CD4-positive, alpha-beta T cell (primary cell): ENCODE measurements at regions of chr17 and their contacts with region 1.

Region 1: DNA sequence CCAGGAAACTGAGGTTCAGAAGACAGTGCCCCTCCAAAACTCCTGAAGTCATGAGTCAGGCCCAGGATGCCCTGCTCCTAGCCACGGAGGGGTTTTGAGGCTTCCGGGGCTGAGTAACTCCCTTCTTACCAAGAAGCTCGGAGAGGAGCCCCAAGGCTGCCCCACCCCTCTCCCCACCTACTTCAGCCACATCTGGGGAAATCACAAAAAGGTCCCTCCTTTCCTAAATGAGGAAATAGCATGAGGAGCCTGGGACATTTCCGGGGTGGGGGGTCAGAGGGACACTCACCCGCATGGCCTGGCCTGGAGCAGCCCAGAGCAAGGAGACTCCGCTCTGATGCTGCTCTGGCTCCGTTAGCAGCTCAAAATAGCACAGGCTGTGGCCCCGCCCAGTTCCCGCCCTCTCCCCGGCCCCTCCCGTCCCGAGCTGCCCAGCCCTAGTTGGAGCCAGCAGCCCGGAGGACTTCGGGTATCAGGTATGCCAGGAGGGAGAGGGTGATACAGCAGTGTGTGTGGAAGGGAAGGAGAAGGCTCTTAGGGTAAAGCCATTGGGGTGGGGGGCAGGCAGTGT is 40.1 kb downstream of the MYO18A start:
- DNase-seq: peak; percentile 57 to 90 (median 78)
- ATAC-seq: peak; percentile 53
- H3K4me3 ChIP-seq: peak overlapping the region; percentile 64
- H3K4me3 Mint-ChIP-seq: peak overlapping the region; percentile 91
- H3K27ac ChIP-seq: peak overlapping the region; percentile 78 to 82
- H3K27ac Mint-ChIP-seq: peak overlapping the region; percentile 96
- H3K4me1 ChIP-seq: peaks cover 80% of the 10 kb centered on the region
- H3K4me1 Mint-ChIP-seq: peaks cover 70% of the 10 kb centered on the region
- H3K27me3 ChIP-seq: no peaks in the 10 kb centered on the region
- H3K27me3 Mint-ChIP-seq: no peaks in the 10 kb centered on the region
- CTCF ChIP-seq: no peak

Region 2: GRCh38 chr17:28896884-28897768 is 243.0 kb before region 1 on chr17 and contains the start of gene FLOT2:
- CTCF ChIA-PET with region 1: no interaction called
- POLR2A ChIA-PET with region 1: no interaction called
- intact Hi-C with region 1: no loop called
- DNase-seq: peak; percentile 50 to 83 (median 68)
- ATAC-seq: peak; percentile 79
- H3K4me3 ChIP-seq: peak within 1 kb of the TSS; percentile 83
- H3K4me3 Mint-ChIP-seq: peak within 1 kb of the TSS; percentile 93
- H3K27ac ChIP-seq: peak within 1 kb of the TSS; percentile 86 to 87
- H3K27ac Mint-ChIP-seq: peak within 1 kb of the TSS; percentile 95
- H3K4me1 ChIP-seq: peaks cover 75% of the 10 kb centered on the region
- H3K4me1 Mint-ChIP-seq: peaks cover 66% of the 10 kb centered on the region
- H3K27me3 ChIP-seq: no peaks in the 10 kb centered on the region
- H3K27me3 Mint-ChIP-seq: no peaks in the 10 kb centered on the region
- CTCF ChIP-seq: peak; percentile 60
- total RNA-seq, gene FLOT2: 79.7 to 85.1 TPM

Region 3: DNA sequence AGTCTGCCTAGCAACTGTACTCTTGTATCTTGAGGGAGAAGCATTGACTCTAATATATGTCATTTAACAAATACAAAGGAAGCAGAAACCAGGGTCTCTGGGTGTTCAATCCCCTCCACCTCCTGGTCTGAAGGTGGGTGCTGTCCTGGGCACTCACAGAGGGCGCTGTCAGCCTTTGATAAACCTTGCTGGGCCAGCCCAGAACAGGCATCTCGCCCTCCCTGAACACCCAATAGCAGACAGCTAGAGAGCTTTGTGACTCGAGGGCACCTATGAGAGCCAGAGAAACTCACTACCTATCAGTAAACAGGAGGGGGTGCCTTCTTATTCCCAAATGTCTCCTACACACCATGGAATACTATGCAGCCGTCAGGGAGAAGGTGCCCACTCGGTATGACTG is 103.6 kb before region 1 on chr17:
- CTCF ChIA-PET with region 1: no interaction called
- POLR2A ChIA-PET with region 1: no interaction called
- intact Hi-C with region 1: no loop called
- DNase-seq: no peak
- ATAC-seq: no peak
- H3K4me3 ChIP-seq: no peak overlapping the region
- H3K4me3 Mint-ChIP-seq: no peak overlapping the region
- H3K27ac ChIP-seq: no peak overlapping the region
- H3K27ac Mint-ChIP-seq: no peak overlapping the region
- H3K4me1 ChIP-seq: no peaks in the 10 kb centered on the region
- H3K4me1 Mint-ChIP-seq: no peaks in the 10 kb centered on the region
- H3K27me3 ChIP-seq: peaks cover 4 to 20% of the 10 kb centered on the region in 2 experiments
- H3K27me3 Mint-ChIP-seq: peaks cover 31% of the 10 kb centered on the region
- CTCF ChIP-seq: no peak

Region 4: DNA sequence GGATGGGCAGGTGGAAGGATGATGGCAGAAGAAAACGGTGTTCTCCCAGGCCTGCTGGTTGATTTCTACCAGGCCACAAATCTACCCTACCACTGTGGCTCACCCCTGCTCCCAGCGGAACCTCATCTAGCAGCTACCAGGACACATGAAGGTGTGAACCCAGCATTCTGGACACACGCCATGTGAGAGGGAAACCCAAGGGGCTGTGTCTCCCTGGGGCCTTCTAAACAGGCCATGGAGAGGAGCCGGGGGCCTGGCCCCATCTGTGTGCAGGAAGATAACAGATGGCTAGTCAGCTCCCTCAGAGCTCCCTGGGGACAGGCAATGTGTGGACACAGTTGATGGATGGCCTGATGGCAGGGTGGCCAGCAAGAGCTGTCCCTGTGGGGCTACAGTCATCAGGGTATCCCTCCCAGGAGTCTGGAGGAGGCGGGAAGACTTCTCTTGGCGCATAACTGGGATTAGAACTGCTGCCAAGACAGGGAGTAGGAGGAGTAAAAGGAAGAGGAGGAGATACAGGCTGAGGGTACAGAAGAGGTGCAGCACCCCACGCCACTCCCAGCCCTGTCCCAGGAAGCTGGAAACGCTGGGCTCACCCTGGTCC is 22.7 kb after region 1 on chr17:
- CTCF ChIA-PET with region 1: no interaction called
- POLR2A ChIA-PET with region 1: no interaction called
- intact Hi-C with region 1: no loop called
- DNase-seq: no peak
- ATAC-seq: no peak
- H3K4me3 ChIP-seq: no peak overlapping the region
- H3K4me3 Mint-ChIP-seq: no peak overlapping the region
- H3K27ac ChIP-seq: no peak overlapping the region
- H3K27ac Mint-ChIP-seq: no peak overlapping the region
- H3K4me1 ChIP-seq: peaks cover 13% of the 10 kb centered on the region
- H3K4me1 Mint-ChIP-seq: peaks cover 17% of the 10 kb centered on the region
- H3K27me3 ChIP-seq: no peaks in the 10 kb centered on the region
- H3K27me3 Mint-ChIP-seq: no peaks in the 10 kb centered on the region
- CTCF ChIP-seq: no peak

Region 5: DNA sequence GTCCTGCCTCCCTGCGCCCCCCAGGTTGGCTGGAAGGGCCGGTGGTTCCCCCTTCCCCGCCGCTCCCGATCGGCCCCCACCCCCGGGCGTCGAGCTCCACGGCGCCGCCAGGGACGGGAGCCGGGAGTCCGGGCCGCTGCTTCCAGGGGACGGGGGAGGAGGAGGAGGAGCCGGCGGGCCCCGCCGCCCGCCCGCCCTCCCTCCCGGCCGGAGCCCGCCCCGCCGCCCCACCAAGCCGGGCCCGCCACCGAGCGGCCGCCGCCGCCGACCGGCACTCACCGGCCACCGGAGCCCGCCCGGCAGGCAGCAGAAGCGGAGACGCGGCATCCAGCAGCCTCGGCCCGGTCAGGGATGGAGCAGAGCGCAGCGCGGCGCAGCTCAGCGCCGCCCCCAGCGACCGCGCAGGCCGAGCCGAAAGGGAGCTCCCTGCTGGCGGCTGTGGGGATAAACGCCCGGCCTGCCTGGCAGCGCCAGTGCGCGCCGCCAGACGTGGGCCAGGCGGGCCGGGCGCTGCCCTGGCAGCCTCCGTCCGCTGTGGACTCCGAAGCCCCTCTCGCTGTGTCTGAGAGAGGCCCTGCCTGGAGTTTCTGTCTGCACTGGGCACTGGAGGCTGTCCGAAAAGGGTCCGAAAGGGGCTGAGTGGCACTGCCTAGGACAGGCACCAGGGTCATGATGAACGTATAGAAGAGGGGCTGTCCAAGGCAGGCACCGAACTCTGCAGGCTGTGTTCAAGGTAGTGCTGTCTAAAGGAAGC is 40.1 kb after region 1 on chr17 and contains the start of gene MYO18A:
- CTCF ChIA-PET with region 1: interaction called, 216 read pairs
- POLR2A ChIA-PET with region 1: interaction called, 17 read pairs
- intact Hi-C with region 1: no loop called
- DNase-seq: peak; percentile 53 to 90 (median 76)
- ATAC-seq: peak; percentile 91
- H3K4me3 ChIP-seq: peak within 1 kb of the TSS; percentile 21
- H3K4me3 Mint-ChIP-seq: peak within 1 kb of the TSS; percentile 75
- H3K27ac ChIP-seq: no peak within 1 kb of the TSS
- H3K27ac Mint-ChIP-seq: no peak within 1 kb of the TSS
- H3K4me1 ChIP-seq: peaks cover 45% of the 10 kb centered on the region
- H3K4me1 Mint-ChIP-seq: peaks cover 34% of the 10 kb centered on the region
- H3K27me3 ChIP-seq: no peaks in the 10 kb centered on the region
- H3K27me3 Mint-ChIP-seq: no peaks in the 10 kb centered on the region
- CTCF ChIP-seq: peak; percentile 75
- total RNA-seq, gene MYO18A: 87.0 to 90.1 TPM

Region 6: GRCh38 chr17:29205047-29205446 is 64.9 kb after region 1 on chr17:
- CTCF ChIA-PET with region 1: no interaction called
- POLR2A ChIA-PET with region 1: no interaction called
- intact Hi-C with region 1: no loop called
- DNase-seq: no peak
- ATAC-seq: no peak
- H3K4me3 ChIP-seq: no peak overlapping the region
- H3K4me3 Mint-ChIP-seq: no peak overlapping the region
- H3K27ac ChIP-seq: no peak overlapping the region
- H3K27ac Mint-ChIP-seq: no peak overlapping the region
- H3K4me1 ChIP-seq: no peaks in the 10 kb centered on the region
- H3K4me1 Mint-ChIP-seq: no peaks in the 10 kb centered on the region
- H3K27me3 ChIP-seq: no peaks in the 10 kb centered on the region
- H3K27me3 Mint-ChIP-seq: peaks cover 5% of the 10 kb centered on the region
- CTCF ChIP-seq: no peak